ENCODE measurements at regions of chr15 and their contacts with region 1.

Region 1: GRCh38 chr15:65916664-65917406 is 47.5 kb downstream of the RAB11A start:
- DNase-seq: peak; percentile 50
- H3K4me3 Mint-ChIP-seq: no peak overlapping the region
- H3K27ac Mint-ChIP-seq: no peak overlapping the region
- H3K4me1 Mint-ChIP-seq: no peaks in the 10 kb centered on the region
- H3K27me3 Mint-ChIP-seq: no peaks in the 10 kb centered on the region
- CTCF ChIP-seq: peak; percentile 42

Region 2: DNA sequence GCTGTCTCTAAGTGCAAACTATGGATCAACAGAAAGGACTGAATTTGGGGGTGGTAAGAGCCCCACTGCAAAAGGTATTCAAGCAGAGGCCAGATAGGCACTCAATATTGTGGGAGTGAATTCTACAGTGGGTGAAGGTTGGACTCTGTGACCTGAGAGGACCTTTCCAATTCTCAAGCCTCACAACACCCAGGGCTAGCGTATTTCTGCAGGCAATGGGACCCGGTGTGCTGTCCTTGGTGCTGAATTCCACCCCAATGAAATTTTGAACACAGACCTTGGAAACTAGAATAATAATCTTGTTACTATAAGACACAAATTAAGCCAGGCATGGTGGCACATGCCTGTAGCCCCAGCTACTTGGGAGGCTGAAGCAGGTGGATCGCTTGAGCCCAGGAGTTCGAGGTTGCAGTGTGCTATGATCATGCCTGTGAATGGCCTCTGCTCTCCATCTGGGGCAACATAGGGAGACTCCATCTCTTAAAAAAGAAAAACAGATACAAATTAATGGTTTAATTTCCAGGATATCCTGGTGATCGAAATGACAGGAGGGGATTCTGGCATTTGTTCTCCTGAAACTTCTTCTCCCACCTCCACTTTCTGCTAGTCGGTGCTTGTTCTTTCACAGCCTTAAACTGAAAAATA is 87.9 kb after region 1 on chr15:
- CTCF ChIA-PET with region 1: no interaction called
- POLR2A ChIA-PET with region 1: no interaction called
- intact Hi-C with region 1: no loop called
- DNase-seq: peak; percentile 50
- H3K4me3 Mint-ChIP-seq: no peak overlapping the region
- H3K27ac Mint-ChIP-seq: no peak overlapping the region
- H3K4me1 Mint-ChIP-seq: peaks cover 4% of the 10 kb centered on the region
- H3K27me3 Mint-ChIP-seq: peaks cover 45% of the 10 kb centered on the region
- CTCF ChIP-seq: no peak

Region 3: DNA sequence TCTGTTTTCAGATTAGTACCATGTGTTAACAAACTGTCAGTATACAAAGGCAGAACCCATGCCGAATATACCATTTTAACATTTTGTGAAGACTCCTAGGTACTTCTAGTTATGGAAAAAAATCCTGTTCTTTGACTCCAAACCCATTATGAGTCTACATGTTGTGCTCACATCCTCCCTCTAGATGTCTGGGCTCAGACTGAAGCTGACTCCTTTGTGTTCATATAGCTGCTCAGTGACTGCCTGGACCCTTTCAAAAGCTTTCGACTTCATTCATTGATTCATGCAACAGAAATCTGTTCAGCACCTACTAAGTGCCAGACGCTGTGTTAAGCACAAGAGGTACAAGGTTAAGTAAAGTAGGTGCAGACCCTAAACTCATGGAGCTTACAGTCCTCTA is 276.2 kb after region 1 on chr15:
- CTCF ChIA-PET with region 1: no interaction called
- POLR2A ChIA-PET with region 1: no interaction called
- intact Hi-C with region 1: loop called (anchors 5 kb)
- DNase-seq: peak; percentile 11
- H3K4me3 Mint-ChIP-seq: no peak overlapping the region
- H3K27ac Mint-ChIP-seq: no peak overlapping the region
- H3K4me1 Mint-ChIP-seq: peaks cover 6% of the 10 kb centered on the region
- H3K27me3 Mint-ChIP-seq: no peaks in the 10 kb centered on the region
- CTCF ChIP-seq: no peak